ENCODE measurements at regions of chr5 and their contacts with region 1.

Region 1: DNA sequence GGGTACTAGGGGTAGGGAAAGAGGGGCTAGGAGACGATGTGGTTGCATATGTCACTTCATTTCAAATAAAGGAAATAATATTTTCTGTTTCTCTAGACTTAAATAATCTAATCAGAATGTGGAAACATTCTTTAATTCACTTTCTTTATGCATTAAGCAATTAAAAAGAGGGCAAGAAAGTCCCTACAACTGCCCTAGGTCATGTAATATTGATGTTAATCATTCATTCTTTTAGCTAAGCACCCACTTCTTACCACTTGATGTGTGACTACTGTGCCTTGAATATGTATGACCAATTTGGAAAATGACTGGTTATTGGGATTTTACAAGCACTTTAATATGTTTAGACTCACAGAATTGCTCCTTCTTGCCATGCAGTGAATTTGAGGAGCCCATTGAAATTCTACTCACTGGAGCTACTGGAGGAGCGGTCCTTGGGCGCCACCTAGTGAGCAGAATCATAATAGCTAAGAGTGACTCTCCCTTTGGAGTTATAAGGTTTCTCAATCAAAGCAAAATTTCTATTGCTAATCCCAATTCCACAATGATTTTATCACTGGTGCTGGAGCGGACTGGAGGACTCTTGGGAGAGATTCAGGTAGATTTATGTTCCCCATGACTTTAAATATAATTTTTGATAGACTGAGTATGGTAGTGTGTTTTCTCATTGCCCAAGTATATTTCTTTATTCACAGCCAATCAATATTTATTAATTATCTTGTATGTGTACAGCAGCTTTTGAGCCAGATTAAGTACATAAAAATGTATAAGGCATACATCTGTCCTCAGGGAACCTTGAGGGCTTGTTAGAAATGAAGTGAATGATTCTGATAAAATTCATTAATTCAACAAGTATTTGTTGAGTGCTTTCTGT is 225.1 kb downstream of the ADGRV1 start:
- DNase-seq: peak; percentile 76
- H3K4me3 ChIP-seq: no peak overlapping the region
- H3K27ac ChIP-seq: no peak overlapping the region
- H3K4me1 ChIP-seq: no peaks in the 10 kb centered on the region
- H3K27me3 ChIP-seq: no peaks in the 10 kb centered on the region
- CTCF ChIP-seq: peak; percentile 91

Region 2: GRCh38 chr5:90434116-90434714 is 349.5 kb before region 1 on chr5:
- CTCF ChIA-PET with region 1: interaction called, 11 read pairs
- POLR2A ChIA-PET with region 1: no interaction called
- intact Hi-C with region 1: loop called (anchors 1 kb)
- DNase-seq: peak; percentile 67
- H3K4me3 ChIP-seq: no peak overlapping the region
- H3K27ac ChIP-seq: no peak overlapping the region
- H3K4me1 ChIP-seq: no peaks in the 10 kb centered on the region
- H3K27me3 ChIP-seq: no peaks in the 10 kb centered on the region
- CTCF ChIP-seq: peak; percentile 89

Region 3: DNA sequence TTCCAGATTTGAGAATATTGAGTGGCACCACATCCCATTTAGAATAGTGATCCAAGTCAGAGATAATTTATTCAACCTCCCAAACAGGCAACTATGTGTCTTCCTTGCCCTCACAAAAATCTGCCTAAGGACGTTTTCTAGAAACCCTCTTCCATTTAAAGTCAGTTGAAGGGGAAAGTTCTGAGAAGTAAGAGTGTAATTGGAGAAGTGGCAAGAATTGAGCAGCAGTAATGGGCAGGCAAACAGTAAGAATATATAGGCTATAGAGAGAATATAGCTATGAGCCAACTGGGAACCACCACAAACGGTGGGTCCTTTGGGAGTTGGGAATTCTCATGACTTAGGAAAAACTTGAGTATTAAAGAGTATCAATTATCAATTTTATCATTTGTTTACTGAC is 343.1 kb before region 1 on chr5:
- CTCF ChIA-PET with region 1: interaction called, 11 read pairs
- POLR2A ChIA-PET with region 1: no interaction called
- intact Hi-C with region 1: loop called (anchors 1 kb)
- DNase-seq: no peak
- H3K4me3 ChIP-seq: no peak overlapping the region
- H3K27ac ChIP-seq: no peak overlapping the region
- H3K4me1 ChIP-seq: peaks cover 3% of the 10 kb centered on the region
- H3K27me3 ChIP-seq: no peaks in the 10 kb centered on the region
- CTCF ChIP-seq: no peak

Region 4: GRCh38 chr5:90612919-90613318 is 170.8 kb before region 1 on chr5:
- CTCF ChIA-PET with region 1: no interaction called
- POLR2A ChIA-PET with region 1: no interaction called
- intact Hi-C with region 1: loop called (anchors 5 kb)
- DNase-seq: no peak
- H3K4me3 ChIP-seq: no peak overlapping the region
- H3K27ac ChIP-seq: no peak overlapping the region
- H3K4me1 ChIP-seq: no peaks in the 10 kb centered on the region
- H3K27me3 ChIP-seq: peaks cover 7% of the 10 kb centered on the region
- CTCF ChIP-seq: no peak

Region 5: GRCh38 chr5:90709323-90710155 is 74.2 kb before region 1 on chr5:
- CTCF ChIA-PET with region 1: interaction called, 3 read pairs
- POLR2A ChIA-PET with region 1: no interaction called
- intact Hi-C with region 1: loop called (anchors 1 kb)
- DNase-seq: peak; percentile 63
- H3K4me3 ChIP-seq: no peak overlapping the region
- H3K27ac ChIP-seq: no peak overlapping the region
- H3K4me1 ChIP-seq: no peaks in the 10 kb centered on the region
- H3K27me3 ChIP-seq: no peaks in the 10 kb centered on the region
- CTCF ChIP-seq: peak; percentile 84

Region 6: DNA sequence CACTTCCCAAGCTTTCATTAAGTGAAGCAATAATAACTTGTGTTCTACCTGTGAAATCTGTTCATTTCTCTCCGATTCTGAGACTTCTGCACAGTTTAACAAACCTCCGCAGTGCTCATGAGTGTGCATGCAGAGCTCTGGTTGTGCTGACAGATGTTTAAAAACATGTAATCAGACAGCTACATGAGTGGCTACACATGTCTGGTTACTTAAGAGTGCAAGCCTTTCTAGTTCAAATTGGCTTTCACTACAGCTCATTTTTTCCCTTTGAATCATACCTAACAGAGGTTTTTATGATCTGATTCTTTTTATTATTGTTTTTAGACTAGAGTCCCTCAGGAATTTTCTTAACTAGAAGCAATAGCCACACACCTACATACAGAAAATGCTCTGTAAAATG is 289.2 kb after region 1 on chr5:
- CTCF ChIA-PET with region 1: no interaction called
- POLR2A ChIA-PET with region 1: no interaction called
- intact Hi-C with region 1: no loop called
- DNase-seq: no peak
- H3K4me3 ChIP-seq: no peak overlapping the region
- H3K27ac ChIP-seq: no peak overlapping the region
- H3K4me1 ChIP-seq: peaks cover 6% of the 10 kb centered on the region
- H3K27me3 ChIP-seq: no peaks in the 10 kb centered on the region
- CTCF ChIP-seq: no peak

Measured in A673 (cell line).